Common myeloid progenitor, CD34-positive (primary cell): ENCODE measurements at regions of chr1 and their contacts with region 1.

Region 1: GRCh38 chr1:28581536-28582247 is 10.4 kb upstream of the RAB42 start:
- DNase-seq: peak; percentile 93 to 96 (median 96)
- H3K4me3 ChIP-seq: peak overlapping the region; percentile 65 to 99 (median 87)
- H3K27ac ChIP-seq: peak overlapping the region; percentile 80 to 94
- H3K4me1 ChIP-seq: peaks cover 12 to 29% (median 28%) of the 10 kb centered on the region in 4 experiments
- H3K27me3 ChIP-seq: no peaks in the 10 kb centered on the region

Region 2: GRCh38 chr1:28552758-28553663 is 28.7 kb before region 1 on chr1 and contains the start of gene TRNAU1AP:
- CTCF ChIA-PET with region 1: interaction called, 16 read pairs
- POLR2A ChIA-PET with region 1: interaction called, 22 read pairs
- DNase-seq: peak; percentile 96 to 98 (median 98)
- H3K4me3 ChIP-seq: peak within 1 kb of the TSS; percentile 83 to 99 (median 87)
- H3K27ac ChIP-seq: peak within 1 kb of the TSS; percentile 52 to 89
- H3K4me1 ChIP-seq: peaks cover 0 to 14% (median 7%) of the 10 kb centered on the region in 4 experiments
- H3K27me3 ChIP-seq: no peaks in the 10 kb centered on the region

Region 3: GRCh38 chr1:28565040-28565439 is 16.7 kb before region 1 on chr1:
- CTCF ChIA-PET with region 1: interaction called, 20 read pairs
- POLR2A ChIA-PET with region 1: interaction called, 5 read pairs
- DNase-seq: no peak
- H3K4me3 ChIP-seq: no peak overlapping the region
- H3K27ac ChIP-seq: no peak overlapping the region
- H3K4me1 ChIP-seq: no peaks in the 10 kb centered on the region
- H3K27me3 ChIP-seq: no peaks in the 10 kb centered on the region

Region 4: GRCh38 chr1:28591708-28592320 is 10.1 kb after region 1 on chr1 and contains the start of gene RAB42:
- CTCF ChIA-PET with region 1: interaction called, 9 read pairs
- POLR2A ChIA-PET with region 1: interaction called, 11 read pairs
- DNase-seq: peak; percentile 14 to 45 (median 40)
- H3K4me3 ChIP-seq: peak within 1 kb of the TSS; percentile 28 to 76 (median 64)
- H3K27ac ChIP-seq: no peak within 1 kb of the TSS
- H3K4me1 ChIP-seq: peaks cover 0 to 22% (median 15%) of the 10 kb centered on the region in 4 experiments
- H3K27me3 ChIP-seq: peaks cover 0 to 4% (median 0%) of the 10 kb centered on the region in 5 experiments

Region 5: DNA sequence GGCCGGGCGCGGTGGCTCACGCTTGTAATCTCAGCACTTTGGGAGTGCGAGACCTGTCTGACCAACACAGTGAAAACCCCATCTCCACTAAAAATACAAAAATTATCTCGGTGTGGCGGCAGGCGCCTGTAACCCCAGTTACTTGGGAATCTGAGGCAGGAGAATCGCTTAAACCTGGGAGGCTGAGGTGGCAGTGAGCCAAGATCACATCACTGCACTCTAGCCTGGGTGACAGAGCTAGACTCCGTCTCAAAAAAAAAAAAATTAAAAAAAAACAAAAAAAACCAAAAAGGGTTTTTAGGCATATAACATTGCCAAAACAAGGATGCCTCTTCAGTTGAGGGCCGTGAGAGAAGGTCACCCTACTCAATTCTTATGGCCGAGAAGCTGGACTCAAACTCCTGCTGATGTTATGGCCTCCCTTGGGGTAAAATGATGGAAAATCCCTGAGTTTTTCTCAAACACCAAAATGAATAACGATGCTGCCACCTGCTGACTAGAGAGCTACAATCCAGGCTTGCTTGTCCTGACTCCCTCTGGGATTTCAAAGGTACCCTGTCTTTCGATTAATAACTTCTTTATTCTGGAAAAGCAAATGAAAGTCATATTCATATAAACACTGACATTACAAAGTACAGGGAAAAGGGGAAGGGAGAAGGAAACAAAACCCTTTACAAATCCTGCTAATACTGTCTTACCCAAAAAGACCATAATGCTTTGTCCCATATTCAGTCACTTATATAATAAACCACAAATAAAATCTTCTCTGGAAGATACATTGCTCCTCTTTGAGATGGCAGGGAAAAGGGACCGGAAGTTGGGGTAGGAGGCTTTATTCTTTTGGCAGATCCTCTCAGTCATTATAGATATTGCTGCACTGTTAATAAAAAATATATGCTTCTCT is 21.1 kb after region 1 on chr1:
- CTCF ChIA-PET with region 1: interaction called, 27 read pairs
- POLR2A ChIA-PET with region 1: interaction called, 5 read pairs
- DNase-seq: peak; percentile 59 to 70 (median 63)
- H3K4me3 ChIP-seq: no peak overlapping the region
- H3K27ac ChIP-seq: no peak overlapping the region
- H3K4me1 ChIP-seq: no peaks in the 10 kb centered on the region
- H3K27me3 ChIP-seq: no peaks in the 10 kb centered on the region

Region 6: DNA sequence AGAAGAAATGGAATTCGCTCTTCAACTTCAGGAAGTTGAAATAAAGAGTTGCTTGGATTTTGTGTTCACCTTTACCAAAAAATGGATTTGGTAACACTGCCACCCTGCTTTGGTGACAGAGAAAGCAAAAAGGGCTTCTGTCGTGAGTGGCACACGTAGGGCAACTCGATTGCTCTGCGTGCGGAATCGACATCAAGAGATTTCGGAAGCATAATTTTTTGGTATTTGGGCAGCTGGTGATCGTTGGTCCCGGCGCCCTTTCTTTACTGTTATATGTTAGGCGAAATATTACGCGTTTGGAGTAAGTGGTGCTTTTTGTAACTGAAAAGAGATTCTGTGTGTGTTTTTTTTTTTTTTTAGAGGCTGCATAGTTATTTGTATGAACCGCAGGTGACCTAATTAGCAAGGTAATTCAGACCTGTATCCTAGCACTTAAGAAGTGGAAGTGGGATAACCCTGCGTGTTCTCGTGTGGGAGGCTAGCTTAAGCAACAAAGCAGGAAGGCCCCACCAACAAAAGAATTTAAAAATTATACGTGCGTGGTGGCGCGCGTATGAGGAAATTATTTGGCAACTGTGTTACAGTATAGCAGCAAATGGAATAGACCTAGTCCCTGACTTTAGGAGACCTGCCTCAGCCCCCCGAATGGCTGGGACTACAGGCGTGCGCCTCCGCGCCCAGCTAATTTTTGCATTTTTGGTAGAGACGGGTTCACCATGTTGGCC is 66.9 kb after region 1 on chr1 and contains the start of gene RNU11:
- CTCF ChIA-PET with region 1: no interaction called
- POLR2A ChIA-PET with region 1: interaction called, 15 read pairs
- DNase-seq: peak; percentile 98 to 99 (median 99)
- H3K4me3 ChIP-seq: peak within 1 kb of the TSS; percentile 7 to 79 (median 57)
- H3K27ac ChIP-seq: peak within 1 kb of the TSS; percentile 100
- H3K4me1 ChIP-seq: peaks cover 4 to 30% (median 24%) of the 10 kb centered on the region in 4 experiments
- H3K27me3 ChIP-seq: no peaks in the 10 kb centered on the region

Region 7: DNA sequence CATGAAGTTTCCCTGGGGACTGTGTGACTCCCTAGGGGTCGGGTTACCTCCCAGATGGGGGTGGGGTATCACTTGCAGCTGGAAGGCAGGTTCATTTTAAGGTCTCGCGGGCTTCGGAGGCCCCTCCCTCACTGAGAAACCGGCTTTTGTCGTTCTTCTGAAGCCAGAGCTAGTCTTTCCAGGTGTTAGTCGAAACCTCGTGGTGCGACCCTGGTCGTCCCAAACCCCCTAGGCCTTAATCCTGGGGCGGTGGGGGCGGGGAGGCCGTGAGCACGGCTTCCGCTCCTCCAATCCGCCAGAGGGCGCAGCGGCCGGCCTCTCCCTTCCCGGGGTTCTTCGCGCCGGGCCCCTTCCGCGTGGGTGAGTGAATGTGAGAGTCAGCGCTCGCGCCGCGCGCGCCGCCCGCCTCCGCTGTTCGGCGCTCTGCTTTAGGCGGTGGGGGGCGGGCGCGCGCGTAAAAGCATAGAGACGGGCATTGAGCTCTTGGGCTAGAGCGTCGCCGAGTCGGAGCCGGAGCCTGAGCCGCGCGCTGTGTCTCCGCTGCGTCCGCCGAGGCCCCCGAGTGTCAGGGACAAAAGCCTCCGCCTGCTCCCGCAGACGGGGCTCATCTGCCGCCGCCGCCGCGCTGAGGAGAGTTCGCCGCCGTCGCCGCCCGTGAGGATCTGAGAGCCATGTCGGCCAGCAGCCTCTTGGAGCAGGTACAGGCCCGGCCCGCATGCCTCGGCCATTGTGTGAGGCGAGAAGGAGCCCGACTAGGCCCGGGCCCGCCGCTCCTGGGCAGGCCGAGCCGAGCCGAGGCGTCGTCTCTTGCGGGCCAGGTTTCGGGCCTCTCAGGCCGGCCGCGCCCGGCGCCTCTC is 155.0 kb after region 1 on chr1 and contains the start of gene YTHDF2:
- CTCF ChIA-PET with region 1: interaction called, 3 read pairs
- POLR2A ChIA-PET with region 1: interaction called, 10 read pairs
- DNase-seq: peak; percentile 98 to 99 (median 99)
- H3K4me3 ChIP-seq: peak within 1 kb of the TSS; percentile 89 to 97 (median 93)
- H3K27ac ChIP-seq: peak within 1 kb of the TSS; percentile 86 to 96
- H3K4me1 ChIP-seq: peaks cover 10 to 35% (median 25%) of the 10 kb centered on the region in 4 experiments
- H3K27me3 ChIP-seq: no peaks in the 10 kb centered on the region